ENCODE measurements at regions of chr11 and their contacts with region 1.

Region 1: GRCh38 chr11:76680518-76681425 is 10.2 kb upstream of the LRRC32 start:
- DNase-seq: peak; percentile 71
- ATAC-seq: peak; percentile 90

Region 2: GRCh38 chr11:76391021-76391420 is 289.8 kb before region 1 on chr11:
- intact Hi-C with region 1: no loop called
- DNase-seq: no peak
- ATAC-seq: no peak

Region 3: GRCh38 chr11:76551400-76551799 is 129.4 kb before region 1 on chr11:
- intact Hi-C with region 1: loop called (anchors 5 kb)
- DNase-seq: no peak
- ATAC-seq: no peak

Region 4: GRCh38 chr11:76598426-76598839 is 82.3 kb before region 1 on chr11:
- intact Hi-C with region 1: loop called (anchors 1 kb)
- DNase-seq: no peak
- ATAC-seq: peak; percentile 67